H1 (cell line): ENCODE measurements at regions of chr19 and their contacts with region 1.

Region 1: DNA sequence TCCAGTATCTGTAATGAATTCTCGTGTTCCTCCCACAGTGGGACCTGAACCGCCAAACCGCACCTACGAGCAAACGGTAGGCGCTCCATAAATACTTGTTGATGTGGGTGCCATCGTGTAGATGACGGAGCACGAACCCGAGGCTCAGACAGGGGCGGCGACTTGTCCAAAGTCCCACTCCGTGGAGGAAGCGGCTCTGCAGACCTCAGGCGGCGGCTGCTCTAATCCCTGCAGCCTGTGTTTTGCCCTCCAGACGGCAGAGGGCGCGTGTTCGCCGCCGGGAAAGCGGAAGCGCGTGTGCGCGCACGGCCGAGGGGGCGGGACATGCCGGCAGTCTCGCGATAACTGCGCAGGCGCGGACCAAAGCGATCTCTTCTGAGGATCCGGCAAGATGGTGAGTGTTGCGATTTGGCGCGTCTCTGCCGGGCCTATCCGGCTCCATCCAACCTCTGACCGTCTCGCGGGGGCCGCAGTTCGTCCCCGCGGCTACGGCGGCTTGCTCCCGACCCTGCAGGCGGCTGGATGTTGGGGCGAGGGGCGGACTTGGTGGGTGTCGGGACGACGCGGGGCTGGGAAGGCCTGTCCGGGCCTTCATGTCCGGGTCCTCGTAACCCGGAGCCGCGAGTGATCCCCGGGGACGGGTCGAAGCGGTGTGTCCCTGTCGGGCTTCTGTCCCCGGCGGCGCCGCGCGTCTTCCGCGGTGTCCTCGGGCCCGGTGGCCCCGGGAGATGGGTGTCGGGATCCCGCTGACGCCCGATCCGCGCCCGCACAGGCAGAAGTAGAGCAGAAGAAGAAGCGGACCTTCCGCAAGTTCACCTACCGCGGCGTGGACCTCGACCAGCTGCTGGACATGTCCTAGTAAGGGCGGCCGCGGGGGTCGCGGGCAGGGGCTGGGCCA is at the start of gene RPS15:
- DNase-seq: peak; percentile 90 to 97
- H3K4me3 ChIP-seq: peak within 1 kb of the TSS; percentile 72 to 97 (median 90)
- H3K27ac ChIP-seq: peak within 1 kb of the TSS; percentile 96
- H3K4me1 ChIP-seq: peaks cover 0 to 5% (median 4%) of the 10 kb centered on the region in 4 experiments; a peak in 4 of 7 replicates
- H3K27me3 ChIP-seq: no peaks in the 10 kb centered on the region
- CTCF ChIP-seq: peak; percentile 91 to 97 (median 92)
- EP300 ChIP-seq: no peak
- POLR2A ChIP-seq: peak; percentile 97 to 98
- RAD21 ChIP-seq: peak; percentile 33 to 52; a peak in 3 of 4 replicates
- total RNA-seq, gene RPS15: 1,562 and 1,589 TPM in 2 replicates

Region 2: GRCh38 chr19:1324806-1325567 is 113.3 kb before region 1 on chr19:
- CTCF ChIA-PET with region 1: no interaction called
- POLR2A ChIA-PET with region 1: no interaction called
- DNase-seq: no peak
- H3K4me3 ChIP-seq: peak overlapping the region in 1 of 4 experiments; percentile 36; a peak in 2 of 8 replicates
- H3K27ac ChIP-seq: no peak overlapping the region
- H3K4me1 ChIP-seq: no peaks in the 10 kb centered on the region
- H3K27me3 ChIP-seq: no peaks in the 10 kb centered on the region; a peak in 1 of 7 replicates
- CTCF ChIP-seq: no peak
- EP300 ChIP-seq: no peak
- POLR2A ChIP-seq: no peak
- RAD21 ChIP-seq: no peak

Region 3: GRCh38 chr19:1455336-1456120 is 17.2 kb after region 1 on chr19:
- CTCF ChIA-PET with region 1: interaction called, 54 read pairs
- POLR2A ChIA-PET with region 1: interaction called, 109 read pairs
- DNase-seq: peak; percentile 90 to 97
- H3K4me3 ChIP-seq: peak overlapping the region in 2 of 4 experiments; percentile 1 to 54; a peak in 3 of 8 replicates
- H3K27ac ChIP-seq: no peak overlapping the region
- H3K4me1 ChIP-seq: peaks cover 0 to 32% (median 27%) of the 10 kb centered on the region in 4 experiments; a peak in 6 of 7 replicates
- H3K27me3 ChIP-seq: peaks cover 6 to 25% (median 20%) of the 10 kb centered on the region in 4 experiments
- CTCF ChIP-seq: no peak
- EP300 ChIP-seq: no peak
- POLR2A ChIP-seq: no peak
- RAD21 ChIP-seq: no peak